AG04449 (cell line): ENCODE measurements at regions of chr6 and their contacts with region 1.

Region 1: DNA sequence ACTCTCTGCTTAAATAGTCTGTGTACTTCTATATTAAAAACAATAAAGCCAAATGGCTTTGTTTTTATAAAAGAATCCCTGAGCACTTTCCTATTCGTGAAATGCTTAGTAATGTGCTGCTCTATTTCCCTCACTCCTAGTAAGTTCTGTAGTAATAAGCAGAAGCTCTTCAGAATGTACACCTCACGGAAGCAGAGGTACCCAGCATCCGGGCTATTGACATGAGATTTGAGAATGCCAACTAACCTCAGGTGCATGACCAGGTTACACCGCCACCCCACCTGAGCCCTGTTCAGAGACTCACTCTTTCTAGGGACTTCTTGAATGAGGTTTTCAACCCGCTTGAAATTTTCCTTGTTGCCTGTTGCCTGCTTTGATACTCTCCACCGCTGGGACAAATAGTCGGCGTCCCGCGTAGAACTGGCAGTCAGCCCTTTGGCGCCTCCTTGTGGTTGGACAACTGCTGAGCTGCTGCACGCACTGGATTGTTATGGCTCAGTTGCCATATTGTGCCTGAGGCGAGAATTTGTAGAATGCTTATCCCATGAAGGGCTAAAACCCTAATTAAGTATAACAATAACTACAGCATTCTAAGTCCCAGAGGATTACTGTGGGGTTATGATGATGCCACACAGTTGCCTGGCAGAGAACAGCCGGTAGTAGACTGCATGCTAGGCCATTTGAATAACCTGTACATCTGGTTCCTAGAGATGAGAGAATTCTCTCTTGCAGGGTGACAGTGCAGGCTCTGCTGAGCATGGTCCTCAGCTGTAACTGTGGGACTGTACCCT is 95.4 kb downstream of the KHDC1L start:
- DNase-seq: no peak
- H3K4me3 ChIP-seq: no peak overlapping the region
- CTCF ChIP-seq: peak; percentile 93

Region 2: DNA sequence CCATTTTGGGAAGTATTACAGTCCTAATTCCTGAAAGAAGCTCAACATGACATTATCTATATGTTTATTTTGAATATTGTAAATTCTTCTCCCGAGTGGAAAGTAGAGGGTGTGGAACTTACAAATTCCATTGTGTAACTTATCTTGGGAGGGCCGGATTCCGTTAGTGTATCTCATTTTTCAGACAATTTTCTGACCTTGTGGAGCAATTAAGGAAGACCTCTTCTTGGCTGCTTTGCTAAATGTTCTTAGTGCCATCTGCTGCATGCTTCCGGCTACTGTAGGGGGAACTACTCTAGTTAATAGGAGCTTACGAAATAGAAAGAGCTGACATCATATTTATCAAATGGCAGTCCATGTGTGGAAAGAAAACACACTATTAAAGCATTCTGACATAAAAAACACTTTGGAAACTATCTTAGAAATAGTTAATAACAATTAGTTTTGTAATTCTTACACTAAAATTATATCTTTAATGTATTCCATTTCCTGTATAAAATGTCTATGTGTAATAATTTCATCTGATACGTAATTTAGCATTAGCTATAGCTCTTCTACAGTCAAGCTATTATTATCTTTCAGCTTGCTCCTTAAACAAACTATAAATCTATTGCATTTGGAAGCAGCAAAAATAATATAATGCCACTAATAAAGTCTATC is 549.4 kb before region 1 on chr6:
- CTCF ChIA-PET with region 1: interaction called, 16 read pairs
- POLR2A ChIA-PET with region 1: no interaction called
- DNase-seq: peak; percentile 77
- H3K4me3 ChIP-seq: no peak overlapping the region
- CTCF ChIP-seq: peak; percentile 66

Region 3: GRCh38 chr6:72622094-72622940 is 507.5 kb before region 1 on chr6:
- CTCF ChIA-PET with region 1: interaction called, 251 read pairs
- POLR2A ChIA-PET with region 1: no interaction called
- DNase-seq: no peak
- H3K4me3 ChIP-seq: peak overlapping the region; percentile 69
- CTCF ChIP-seq: peak; percentile 38

Region 4: GRCh38 chr6:72636215-72636614 is 493.6 kb before region 1 on chr6:
- CTCF ChIA-PET with region 1: interaction called, 12 read pairs
- POLR2A ChIA-PET with region 1: no interaction called
- DNase-seq: no peak
- H3K4me3 ChIP-seq: no peak overlapping the region
- CTCF ChIP-seq: no peak

Region 5: DNA sequence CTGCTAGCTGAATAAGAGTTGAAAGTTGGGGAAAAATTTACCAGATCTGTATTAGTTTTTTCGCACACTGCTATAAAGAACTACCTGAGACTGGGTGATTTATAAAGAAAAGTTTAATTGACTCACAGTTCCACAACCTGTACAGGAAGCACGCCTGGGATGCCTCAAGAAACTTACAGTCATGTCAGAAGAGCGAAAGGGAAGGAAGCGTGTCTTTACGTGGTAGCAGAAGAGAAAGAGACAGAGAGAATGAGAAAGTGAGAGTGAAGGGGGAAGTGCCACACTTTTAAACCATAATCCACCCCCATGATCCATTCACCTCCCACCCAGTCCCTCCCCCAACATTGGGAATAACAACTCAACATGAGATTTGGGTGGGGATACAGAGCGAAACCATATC is 15.8 kb after region 1 on chr6:
- CTCF ChIA-PET with region 1: interaction called, 14 read pairs
- POLR2A ChIA-PET with region 1: no interaction called
- DNase-seq: no peak
- H3K4me3 ChIP-seq: no peak overlapping the region
- CTCF ChIP-seq: no peak

Region 6: DNA sequence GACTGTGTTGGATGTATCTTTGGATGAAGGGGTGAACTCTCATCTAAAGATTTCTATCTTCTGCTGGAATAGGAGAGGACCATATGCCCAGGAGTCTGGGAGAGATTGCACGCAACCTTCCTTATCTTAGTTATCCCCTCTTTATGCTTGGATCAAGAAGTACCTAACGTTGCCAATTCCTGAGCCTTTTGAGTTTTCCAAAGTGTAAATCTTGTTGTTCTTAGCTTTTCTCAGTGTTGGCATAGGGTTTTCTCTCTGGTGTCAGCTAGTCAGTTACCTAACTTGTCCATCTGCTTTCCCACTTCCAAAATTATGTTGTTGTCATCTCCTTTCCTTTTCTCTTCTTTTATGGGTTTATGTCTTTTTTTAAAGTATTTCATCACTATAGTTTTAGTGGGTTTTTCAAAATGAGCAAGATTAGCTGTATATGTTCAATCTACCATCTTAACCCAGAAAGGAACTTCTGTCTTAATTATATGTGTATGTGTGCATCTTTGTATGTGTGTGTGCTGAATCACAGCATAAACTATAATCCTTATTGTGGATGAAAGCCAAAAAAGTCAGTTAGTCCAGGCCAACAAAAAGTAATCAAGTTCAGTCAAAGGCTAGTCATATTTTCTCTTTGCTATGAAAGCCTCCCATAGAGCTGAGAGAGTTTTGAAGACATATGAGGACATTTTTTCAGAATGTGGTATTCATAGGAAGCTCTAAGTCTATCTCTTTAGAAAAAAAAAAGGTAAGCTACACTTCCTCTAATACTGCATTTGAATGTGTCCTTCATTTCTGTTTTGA is 23.3 kb after region 1 on chr6:
- CTCF ChIA-PET with region 1: interaction called, 17 read pairs
- POLR2A ChIA-PET with region 1: no interaction called
- DNase-seq: peak; percentile 45
- H3K4me3 ChIP-seq: no peak overlapping the region
- CTCF ChIP-seq: no peak